Stomach (tissue), 19 donors: ENCODE measurements at regions of chr11 and their contacts with region 1.

Region 1: GRCh38 chr11:121249039-121249663 is 43.4 kb upstream of the SC5D start:
- DNase-seq: peak in 1 of 2 donors; percentile 46
- H3K4me3 ChIP-seq: no peak overlapping the region
- H3K27ac ChIP-seq: no peak overlapping the region
- H3K4me1 ChIP-seq: peaks cover 0 to 9% (median 0%) of the 10 kb centered on the region in 4 donors
- H3K27me3 ChIP-seq: no peaks in the 10 kb centered on the region
- CTCF ChIP-seq: peak in 5 of 7 experiments; percentile 65 to 81 (median 78)
- EP300 ChIP-seq: no peak
- POLR2A ChIP-seq: no peak

Region 2: DNA sequence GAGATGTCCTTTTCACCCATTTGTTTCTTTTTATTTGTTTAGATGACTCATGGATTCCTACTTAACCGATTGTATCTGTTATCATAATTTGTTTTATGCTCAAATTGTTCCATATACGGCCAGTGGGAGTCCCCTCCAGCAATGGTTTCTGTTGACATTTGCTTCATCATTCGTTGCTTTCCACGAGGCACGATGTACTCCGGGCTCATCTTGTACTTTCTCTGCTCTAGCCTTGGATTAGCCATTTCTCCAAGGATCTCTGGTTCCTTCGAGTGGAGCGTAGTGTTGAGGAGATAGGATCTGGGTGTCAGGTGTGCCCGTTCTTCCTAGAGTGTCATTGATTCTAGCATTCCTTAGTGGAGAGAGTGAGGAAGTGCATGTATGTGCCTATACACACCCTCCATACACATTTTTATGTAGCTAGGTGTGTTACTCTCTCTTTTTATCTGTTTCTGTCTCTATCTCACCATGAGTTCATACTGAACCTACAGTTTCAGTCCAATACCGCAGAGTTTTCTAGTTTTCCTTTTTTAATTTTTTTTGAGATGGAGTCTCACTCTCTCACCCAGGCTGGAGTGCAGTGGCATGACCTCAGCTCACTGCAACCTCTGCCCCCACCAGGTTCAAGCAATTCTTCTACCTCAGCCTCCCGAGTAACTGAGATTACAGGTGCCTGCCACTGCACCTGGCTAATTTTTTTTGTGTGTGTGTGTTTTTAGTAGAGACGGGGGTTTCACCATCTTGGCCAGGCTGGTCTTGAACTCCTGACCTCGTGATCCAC is 116.8 kb before region 1 on chr11:
- intact Hi-C with region 1: no loop called
- DNase-seq: no peak
- H3K4me3 ChIP-seq: no peak overlapping the region
- H3K27ac ChIP-seq: no peak overlapping the region
- H3K4me1 ChIP-seq: no peaks in the 10 kb centered on the region
- H3K27me3 ChIP-seq: no peaks in the 10 kb centered on the region
- CTCF ChIP-seq: no peak
- EP300 ChIP-seq: no peak
- POLR2A ChIP-seq: no peak

Region 3: DNA sequence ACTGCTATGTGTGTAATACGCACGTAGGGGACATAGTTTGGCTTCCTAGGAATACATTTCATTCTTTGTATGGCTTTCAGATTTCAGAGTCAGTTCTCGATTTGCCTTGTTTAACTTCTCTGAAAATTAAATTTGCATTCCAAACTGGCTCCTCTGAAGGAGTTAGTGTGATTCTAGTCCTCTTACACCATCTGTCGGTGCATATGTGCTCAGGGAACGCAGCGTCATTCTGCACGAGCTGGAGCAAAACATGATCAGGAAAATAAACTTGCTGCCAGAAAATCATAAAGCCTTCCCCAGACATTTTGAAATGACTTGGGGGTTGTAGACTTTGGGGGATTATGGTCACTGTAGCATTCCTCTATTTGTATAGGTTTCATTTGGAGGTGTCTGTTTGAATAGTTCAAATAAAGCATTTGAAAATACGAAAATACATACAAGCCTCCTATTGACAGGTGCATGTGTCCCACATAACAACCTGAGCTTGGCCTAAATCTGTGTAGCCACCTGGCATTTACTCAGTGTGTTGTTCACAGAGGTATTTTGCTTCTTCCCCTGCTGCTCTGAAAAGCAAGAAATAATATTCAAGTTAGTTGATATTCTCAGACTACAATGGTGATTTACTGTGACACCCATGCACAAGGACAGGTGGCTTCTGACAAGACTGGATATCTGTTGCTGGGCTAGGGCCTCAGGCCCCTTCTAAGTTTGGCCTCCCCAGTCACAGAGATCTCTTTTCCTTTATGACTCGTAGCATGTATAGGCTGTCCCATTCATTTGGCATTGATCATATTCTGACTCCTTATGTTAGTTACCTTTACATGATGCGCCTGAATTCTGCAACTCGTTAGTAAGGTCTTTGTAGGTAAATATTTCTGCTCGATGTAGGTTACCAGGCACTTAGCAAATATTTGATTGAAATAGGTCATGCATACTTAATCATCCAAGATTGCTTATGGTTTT is 285.3 kb after region 1 on chr11:
- intact Hi-C with region 1: no loop called
- DNase-seq: peak; percentile 46 to 69
- H3K4me3 ChIP-seq: no peak overlapping the region
- H3K27ac ChIP-seq: no peak overlapping the region
- H3K4me1 ChIP-seq: no peaks in the 10 kb centered on the region
- H3K27me3 ChIP-seq: no peaks in the 10 kb centered on the region
- CTCF ChIP-seq: peak in 3 of 7 experiments; percentile 33 to 53 (median 35)
- EP300 ChIP-seq: no peak
- POLR2A ChIP-seq: no peak

Region 4: GRCh38 chr11:121591405-121592033 is 342.4 kb after region 1 on chr11:
- intact Hi-C with region 1: loop called (anchors 5 kb)
- DNase-seq: peak; percentile 70 to 92
- H3K4me3 ChIP-seq: no peak overlapping the region
- H3K27ac ChIP-seq: no peak overlapping the region
- H3K4me1 ChIP-seq: peaks cover 0 to 6% (median 0%) of the 10 kb centered on the region in 4 donors
- H3K27me3 ChIP-seq: no peaks in the 10 kb centered on the region
- CTCF ChIP-seq: peak in 5 of 7 experiments; percentile 76 to 86 (median 77)
- EP300 ChIP-seq: no peak
- POLR2A ChIP-seq: no peak